Mammary epithelial cell (primary cell): ENCODE measurements at regions of chr9 and their contacts with region 1.

Region 1: GRCh38 chr9:105302728-105303127 is 58.3 kb downstream of the SLC44A1 start:
- DNase-seq: no peak
- H3K4me3 ChIP-seq: no peak overlapping the region
- H3K27ac ChIP-seq: no peak overlapping the region
- H3K4me1 ChIP-seq: peaks cover 18% of the 10 kb centered on the region
- H3K27me3 ChIP-seq: no peaks in the 10 kb centered on the region
- CTCF ChIP-seq: no peak

Region 2: DNA sequence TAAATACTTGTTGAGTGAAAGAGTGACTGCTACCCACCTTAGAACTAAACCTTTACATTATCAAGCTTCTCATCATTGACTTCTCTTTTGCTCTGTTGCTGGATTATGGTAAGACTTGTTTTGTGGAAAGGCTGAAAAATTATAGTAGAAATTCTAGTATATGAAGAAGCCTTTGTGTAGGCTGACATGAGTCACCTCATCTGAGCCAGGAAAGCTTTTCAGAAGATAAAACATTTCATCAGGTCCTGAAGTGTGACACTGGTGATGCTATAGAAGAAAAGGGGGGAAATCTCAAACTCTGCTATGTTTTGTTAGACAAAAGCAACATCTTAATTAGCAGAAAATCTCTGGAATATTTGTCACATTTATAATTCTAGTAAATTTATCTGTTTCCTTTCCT is 76.7 kb before region 1 on chr9:
- CTCF ChIA-PET with region 1: no interaction called
- dilution Hi-C with region 1: loop called (anchors 5 kb)
- in situ Hi-C with region 1: no loop called
- intact Hi-C with region 1: no loop called
- DNase-seq: no peak
- H3K4me3 ChIP-seq: no peak overlapping the region
- H3K27ac ChIP-seq: no peak overlapping the region
- H3K4me1 ChIP-seq: no peaks in the 10 kb centered on the region
- H3K27me3 ChIP-seq: no peaks in the 10 kb centered on the region
- CTCF ChIP-seq: no peak

Region 3: GRCh38 chr9:105757496-105758251 is 454.9 kb after region 1 on chr9:
- CTCF ChIA-PET with region 1: no interaction called
- dilution Hi-C with region 1: no loop called
- in situ Hi-C with region 1: no loop called
- intact Hi-C with region 1: no loop called
- DNase-seq: no peak
- H3K4me3 ChIP-seq: no peak overlapping the region
- H3K27ac ChIP-seq: no peak overlapping the region
- H3K4me1 ChIP-seq: no peaks in the 10 kb centered on the region
- H3K27me3 ChIP-seq: no peaks in the 10 kb centered on the region
- CTCF ChIP-seq: no peak